Mammary epithelial cell (primary cell): ENCODE measurements at regions of chr11 and their contacts with region 1.

Region 1: DNA sequence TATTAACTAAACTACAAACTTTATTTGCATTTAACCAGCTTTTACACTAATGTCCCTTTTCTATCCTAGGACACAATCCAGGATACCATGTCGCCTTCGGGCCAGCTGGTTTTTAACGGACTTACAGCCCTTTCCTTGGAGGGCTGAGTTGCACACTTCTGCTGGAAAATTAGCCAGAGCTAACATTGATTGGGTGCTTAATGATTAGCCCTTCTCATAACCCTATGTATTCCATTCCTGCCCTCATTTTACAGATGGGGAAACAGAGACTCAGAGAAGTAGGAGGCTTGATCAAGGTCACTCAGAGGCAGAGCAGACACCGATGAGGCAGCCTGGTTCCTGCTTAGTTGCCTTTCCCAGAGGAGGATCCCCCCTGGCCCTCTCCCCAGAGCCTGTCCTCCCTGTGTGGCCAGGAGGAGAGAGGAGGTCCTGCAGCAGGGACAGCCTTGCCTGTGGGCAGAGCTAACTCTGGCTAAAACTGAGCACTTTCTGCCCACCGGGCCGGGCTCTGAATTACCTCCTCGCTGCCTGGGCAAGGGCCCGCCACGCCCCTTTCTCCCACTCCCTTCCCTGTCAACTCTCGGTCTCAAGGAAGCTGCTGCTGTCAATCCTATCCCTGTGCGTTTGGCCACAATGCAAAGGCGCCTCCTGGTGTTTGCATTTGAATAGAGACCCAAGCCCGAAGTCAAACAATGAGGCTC is 59.6 kb upstream of the PAX6 start:
- DNase-seq: peak; percentile 23
- H3K4me3 ChIP-seq: no peak overlapping the region
- H3K27ac ChIP-seq: no peak overlapping the region
- H3K4me1 ChIP-seq: peaks cover 7% of the 10 kb centered on the region
- H3K27me3 ChIP-seq: no peaks in the 10 kb centered on the region
- CTCF ChIP-seq: peak; percentile 42 to 83

Region 2: DNA sequence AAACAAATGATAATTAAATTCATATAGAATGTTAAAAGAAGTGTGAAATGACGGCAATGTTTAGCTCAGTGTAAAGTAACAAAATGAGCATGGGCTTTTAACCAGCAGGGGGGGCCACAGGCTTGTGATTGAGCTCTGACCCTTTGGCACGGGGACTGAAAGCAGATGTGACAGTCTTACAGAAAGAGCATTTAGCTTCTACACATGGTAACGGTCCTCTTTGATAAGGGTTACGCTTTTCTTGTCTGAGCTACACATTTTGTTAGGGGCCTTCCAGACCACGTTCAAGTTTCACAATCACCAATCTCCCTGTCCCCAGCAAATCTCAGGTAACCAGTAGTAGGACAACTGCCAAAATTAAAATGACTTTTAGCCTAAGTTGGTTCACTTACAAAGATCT is 763.7 kb before region 1 on chr11:
- CTCF ChIA-PET with region 1: no interaction called
- dilution Hi-C with region 1: no loop called
- in situ Hi-C with region 1: no loop called
- intact Hi-C with region 1: loop called (anchors 2 kb)
- DNase-seq: peak; percentile 39
- H3K4me3 ChIP-seq: no peak overlapping the region
- H3K27ac ChIP-seq: no peak overlapping the region
- H3K4me1 ChIP-seq: no peaks in the 10 kb centered on the region
- H3K27me3 ChIP-seq: no peaks in the 10 kb centered on the region
- CTCF ChIP-seq: peak; percentile 77 to 85

Region 3: DNA sequence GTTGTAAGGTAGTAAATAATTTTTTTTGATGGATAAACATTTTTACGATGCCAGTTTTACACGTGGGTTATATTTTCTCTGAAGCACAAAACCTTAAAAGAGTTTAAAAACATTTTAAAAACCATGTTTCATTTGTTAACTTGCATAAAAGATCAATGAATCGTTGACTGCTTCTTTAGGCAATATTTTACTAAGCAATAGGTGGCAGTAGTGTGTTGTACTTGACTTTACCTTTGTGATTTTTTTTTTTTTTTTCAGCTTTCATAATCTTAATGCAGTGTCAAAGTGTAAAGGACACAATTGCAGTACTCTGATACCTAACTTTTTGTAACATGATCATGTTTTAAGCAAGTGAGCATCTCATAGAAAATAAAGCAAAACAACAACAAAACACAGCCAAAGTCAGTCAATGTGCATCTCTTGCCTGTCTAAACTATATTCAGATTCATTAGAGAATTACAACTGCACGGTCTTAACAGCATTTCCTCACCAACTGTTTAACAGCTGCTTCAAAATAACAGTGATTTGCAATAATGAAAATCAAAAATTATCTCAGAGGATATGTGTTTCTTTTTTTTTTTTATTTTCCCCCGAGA is 473.4 kb before region 1 on chr11:
- CTCF ChIA-PET with region 1: no interaction called
- dilution Hi-C with region 1: no loop called
- in situ Hi-C with region 1: loop called in 1 of 2 experiments (anchors 25 kb)
- intact Hi-C with region 1: loop called (anchors 1 kb)
- DNase-seq: peak; percentile 2
- H3K4me3 ChIP-seq: no peak overlapping the region
- H3K27ac ChIP-seq: no peak overlapping the region
- H3K4me1 ChIP-seq: no peaks in the 10 kb centered on the region
- H3K27me3 ChIP-seq: no peaks in the 10 kb centered on the region
- CTCF ChIP-seq: peak; percentile 65 to 73

Region 4: GRCh38 chr11:31487848-31488247 is 382.9 kb before region 1 on chr11:
- CTCF ChIA-PET with region 1: no interaction called
- dilution Hi-C with region 1: no loop called
- in situ Hi-C with region 1: loop called in 1 of 2 experiments (anchors 10 kb)
- intact Hi-C with region 1: loop called (anchors 1 kb)
- DNase-seq: peak; percentile 18
- H3K4me3 ChIP-seq: no peak overlapping the region
- H3K27ac ChIP-seq: no peak overlapping the region
- H3K4me1 ChIP-seq: no peaks in the 10 kb centered on the region
- H3K27me3 ChIP-seq: no peaks in the 10 kb centered on the region
- CTCF ChIP-seq: peak; percentile 27 to 48

Region 5: GRCh38 chr11:31826536-31827438 is 44.0 kb before region 1 on chr11:
- CTCF ChIA-PET with region 1: no interaction called
- dilution Hi-C with region 1: no loop called
- in situ Hi-C with region 1: no loop called
- intact Hi-C with region 1: no loop called
- DNase-seq: no peak
- H3K4me3 ChIP-seq: no peak overlapping the region
- H3K27ac ChIP-seq: no peak overlapping the region
- H3K4me1 ChIP-seq: no peaks in the 10 kb centered on the region
- H3K27me3 ChIP-seq: peaks cover 54% of the 10 kb centered on the region
- CTCF ChIP-seq: no peak

Region 6: GRCh38 chr11:32006799-32007388 is 136.1 kb after region 1 on chr11:
- CTCF ChIA-PET with region 1: no interaction called
- dilution Hi-C with region 1: no loop called
- in situ Hi-C with region 1: no loop called
- intact Hi-C with region 1: loop called (anchors 1 kb)
- DNase-seq: peak; percentile 38
- H3K4me3 ChIP-seq: no peak overlapping the region
- H3K27ac ChIP-seq: no peak overlapping the region
- H3K4me1 ChIP-seq: peaks cover 8% of the 10 kb centered on the region
- H3K27me3 ChIP-seq: no peaks in the 10 kb centered on the region
- CTCF ChIP-seq: peak; percentile 62 to 85